ENCODE measurements at regions of chr14 and their contacts with region 1.

Region 1: DNA sequence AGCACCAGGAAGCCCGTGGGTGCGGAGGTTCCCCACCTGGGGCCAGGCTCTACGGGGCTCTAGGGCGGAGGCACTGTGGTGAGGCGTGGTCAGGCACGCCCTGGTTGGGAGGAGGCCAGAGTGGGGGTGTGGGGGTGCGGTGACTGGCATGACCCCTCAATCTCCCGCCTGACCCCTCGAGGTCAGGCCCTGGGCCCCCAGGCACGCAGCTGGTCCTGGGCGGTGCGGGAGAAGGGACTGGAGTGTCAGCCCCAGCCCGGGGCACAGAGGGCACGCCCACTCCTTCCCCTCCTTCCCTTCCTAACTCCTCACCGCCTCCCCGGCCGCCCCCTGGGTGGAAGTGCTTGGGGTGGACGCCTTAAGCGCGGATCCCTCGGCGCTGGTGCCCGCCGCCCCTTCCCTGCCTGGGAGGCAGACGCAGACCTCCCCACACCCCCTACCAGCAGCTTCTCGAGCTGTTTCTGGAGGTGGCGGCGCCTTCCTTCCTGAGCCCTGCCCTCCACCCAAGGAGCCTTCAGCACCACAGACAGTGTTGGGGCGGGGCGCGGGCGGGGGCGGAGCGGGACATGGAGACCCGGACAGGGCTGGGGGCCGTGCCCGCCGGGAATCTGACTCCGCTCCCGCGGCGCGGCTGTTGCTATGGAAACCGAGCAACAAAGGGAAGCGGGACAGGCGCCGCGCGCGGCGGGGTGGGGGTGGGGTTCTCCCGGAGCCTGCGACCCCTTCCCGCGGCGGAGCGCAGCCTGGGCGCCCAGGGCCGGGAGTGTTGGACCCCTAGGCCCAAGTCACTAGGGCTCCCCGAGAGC is 741 bp upstream of the CRIP2 start:
- DNase-seq: peak; percentile 69 to 90 (median 77)
- H3K4me3 ChIP-seq: peak overlapping the region; percentile 32 to 78 (median 60)
- H3K27ac ChIP-seq: peak overlapping the region in 1 of 2 experiments; percentile 43
- H3K4me1 ChIP-seq: peaks cover 0 to 56% (median 34%) of the 10 kb centered on the region in 4 experiments
- H3K27me3 ChIP-seq: peaks cover 0 to 49% (median 17%) of the 10 kb centered on the region in 5 experiments

Region 2: DNA sequence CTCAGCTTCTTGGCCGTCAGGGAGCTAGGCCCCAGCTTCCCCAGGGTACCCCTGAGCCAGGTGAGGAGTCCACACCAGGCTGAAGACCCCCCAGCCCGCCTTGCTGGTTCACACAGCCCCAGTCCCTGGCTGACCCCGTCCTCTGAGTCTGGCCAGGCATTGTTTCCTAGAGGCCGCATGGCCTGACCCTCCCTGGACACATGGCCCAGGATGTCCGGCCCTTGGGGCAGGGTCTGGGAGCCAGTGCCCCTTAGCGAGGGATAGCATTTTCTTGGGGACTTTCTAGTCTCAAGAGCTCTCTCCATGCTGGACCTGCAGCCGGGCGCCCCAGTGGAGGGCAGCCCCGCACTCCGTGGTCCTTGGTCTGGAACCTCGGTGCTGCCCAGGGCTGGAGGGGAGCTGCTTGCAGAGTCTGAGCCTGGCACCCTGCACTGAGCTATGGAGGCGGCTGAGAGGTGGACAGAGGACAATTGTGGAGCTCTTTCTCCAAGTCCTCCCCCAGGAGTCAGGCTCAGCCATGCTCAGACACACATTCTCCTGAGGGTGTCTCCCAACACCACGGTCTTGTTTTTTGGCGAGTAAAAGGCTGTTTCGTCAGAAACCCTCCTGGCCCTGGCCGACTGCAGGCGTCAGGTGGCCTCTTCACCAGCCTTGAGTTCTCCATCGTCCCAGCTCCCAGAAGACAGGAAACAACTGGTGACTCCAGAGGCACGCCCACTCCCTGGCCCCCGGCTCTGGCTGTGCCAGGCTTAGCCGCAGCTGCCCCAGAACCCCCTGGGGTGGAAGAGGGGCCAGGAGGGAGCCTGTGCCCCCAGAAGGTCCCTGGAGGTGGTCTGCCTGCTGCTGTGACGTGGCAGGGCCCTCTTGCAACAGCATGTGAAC is 16.9 kb before region 1 on chr14:
- CTCF ChIA-PET with region 1: interaction called, 10 read pairs
- POLR2A ChIA-PET with region 1: no interaction called
- DNase-seq: no peak
- H3K4me3 ChIP-seq: no peak overlapping the region
- H3K27ac ChIP-seq: no peak overlapping the region
- H3K4me1 ChIP-seq: no peaks in the 10 kb centered on the region
- H3K27me3 ChIP-seq: no peaks in the 10 kb centered on the region

Region 3: DNA sequence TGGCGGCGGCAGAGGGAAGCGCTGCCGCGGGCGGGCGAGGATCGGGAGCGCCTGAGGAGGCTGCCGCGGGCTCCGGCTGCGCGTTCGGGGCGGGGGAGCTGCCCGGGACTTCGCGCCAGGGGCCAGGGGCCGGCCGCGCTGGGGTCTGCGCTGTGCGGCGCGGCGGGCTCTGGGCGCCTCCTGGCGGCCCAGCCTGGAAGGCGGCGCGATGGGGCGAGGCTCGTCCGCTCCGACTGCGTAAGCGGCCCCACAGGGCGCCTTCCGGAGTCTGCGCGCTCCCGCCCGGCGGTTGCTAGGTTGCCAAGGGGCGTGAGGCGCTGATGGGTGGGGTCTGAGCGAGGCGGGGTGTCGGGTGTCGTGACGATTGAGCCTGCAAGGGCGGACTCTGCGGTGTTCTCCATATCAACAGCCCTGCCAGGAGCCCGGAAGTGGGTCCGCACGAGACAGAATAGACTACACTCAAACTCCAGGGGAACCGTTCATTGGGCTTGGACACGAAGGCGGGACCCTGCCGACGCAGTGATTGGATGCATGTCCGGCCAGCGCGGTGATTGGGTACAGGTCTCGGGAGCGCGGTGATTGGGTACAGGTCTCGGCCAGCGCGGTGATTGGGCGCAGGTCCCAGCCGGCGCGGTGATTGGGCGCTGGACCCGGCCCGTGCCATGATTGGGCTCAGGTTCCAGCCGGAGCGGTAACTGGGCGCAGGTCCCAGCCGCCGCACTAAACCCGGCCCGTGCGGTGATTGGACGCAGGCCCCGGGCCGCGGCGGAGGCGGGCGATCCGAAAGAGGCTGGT is 16.9 kb after region 1 on chr14 and contains the start of gene TEDC1:
- CTCF ChIA-PET with region 1: interaction called, 77 read pairs
- POLR2A ChIA-PET with region 1: interaction called, 5 read pairs
- DNase-seq: peak; percentile 100
- H3K4me3 ChIP-seq: peak within 1 kb of the TSS; percentile 58 to 83 (median 75)
- H3K27ac ChIP-seq: peak within 1 kb of the TSS; percentile 70 to 88
- H3K4me1 ChIP-seq: peaks cover 0 to 55% (median 52%) of the 10 kb centered on the region in 4 experiments
- H3K27me3 ChIP-seq: peaks cover 0 to 29% (median 5%) of the 10 kb centered on the region in 5 experiments

Measured in common myeloid progenitor, CD34-positive (primary cell).